Astrocyte of the cerebellum (primary cell): ENCODE measurements at regions of chr13 and their contacts with region 1.

Region 1: DNA sequence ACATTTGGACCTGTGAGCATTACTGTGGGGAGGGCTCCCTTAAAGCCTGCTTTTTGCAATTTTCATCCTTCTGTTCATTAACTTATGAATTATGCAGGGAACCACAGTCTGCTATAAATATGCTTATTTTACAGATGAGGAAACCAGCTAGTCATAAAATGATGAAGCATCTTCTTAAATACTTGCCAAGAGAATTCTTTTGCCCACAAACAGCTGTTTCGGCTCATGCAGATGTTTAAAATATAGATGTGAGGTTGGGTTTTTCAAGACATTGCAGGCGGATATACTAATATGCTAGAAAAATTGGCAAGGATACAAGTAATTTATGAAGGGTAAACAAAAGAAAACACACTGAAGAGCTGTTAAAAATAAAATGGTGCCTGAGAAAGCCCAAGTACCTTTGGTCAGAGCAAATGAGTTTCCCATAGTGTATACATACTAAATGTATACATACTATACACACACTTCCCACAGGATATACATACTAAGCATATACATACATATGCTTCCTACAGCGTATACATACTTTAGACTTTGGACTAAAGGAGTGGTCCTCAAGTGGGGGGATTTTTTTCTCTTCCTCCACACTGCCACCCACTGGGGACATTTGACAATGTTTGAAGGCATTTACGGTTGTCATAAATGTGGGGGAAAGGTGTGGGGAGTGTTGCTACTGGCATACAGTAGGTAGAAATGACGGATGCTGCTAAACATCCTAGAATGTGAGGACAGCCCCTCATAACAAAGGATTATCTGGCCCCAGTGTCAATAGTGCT is 164.9 kb upstream of the CSNK1A1L start:
- DNase-seq: no peak
- H3K4me3 ChIP-seq: no peak overlapping the region
- CTCF ChIP-seq: no peak

Region 2: GRCh38 chr13:37326334-37326733 is 55.9 kb after region 1 on chr13:
- in situ Hi-C with region 1: loop called (anchors 5 kb)
- DNase-seq: no peak
- H3K4me3 ChIP-seq: no peak overlapping the region
- CTCF ChIP-seq: no peak